ENCODE measurements at regions of chr20 and their contacts with region 1.

Region 1: DNA sequence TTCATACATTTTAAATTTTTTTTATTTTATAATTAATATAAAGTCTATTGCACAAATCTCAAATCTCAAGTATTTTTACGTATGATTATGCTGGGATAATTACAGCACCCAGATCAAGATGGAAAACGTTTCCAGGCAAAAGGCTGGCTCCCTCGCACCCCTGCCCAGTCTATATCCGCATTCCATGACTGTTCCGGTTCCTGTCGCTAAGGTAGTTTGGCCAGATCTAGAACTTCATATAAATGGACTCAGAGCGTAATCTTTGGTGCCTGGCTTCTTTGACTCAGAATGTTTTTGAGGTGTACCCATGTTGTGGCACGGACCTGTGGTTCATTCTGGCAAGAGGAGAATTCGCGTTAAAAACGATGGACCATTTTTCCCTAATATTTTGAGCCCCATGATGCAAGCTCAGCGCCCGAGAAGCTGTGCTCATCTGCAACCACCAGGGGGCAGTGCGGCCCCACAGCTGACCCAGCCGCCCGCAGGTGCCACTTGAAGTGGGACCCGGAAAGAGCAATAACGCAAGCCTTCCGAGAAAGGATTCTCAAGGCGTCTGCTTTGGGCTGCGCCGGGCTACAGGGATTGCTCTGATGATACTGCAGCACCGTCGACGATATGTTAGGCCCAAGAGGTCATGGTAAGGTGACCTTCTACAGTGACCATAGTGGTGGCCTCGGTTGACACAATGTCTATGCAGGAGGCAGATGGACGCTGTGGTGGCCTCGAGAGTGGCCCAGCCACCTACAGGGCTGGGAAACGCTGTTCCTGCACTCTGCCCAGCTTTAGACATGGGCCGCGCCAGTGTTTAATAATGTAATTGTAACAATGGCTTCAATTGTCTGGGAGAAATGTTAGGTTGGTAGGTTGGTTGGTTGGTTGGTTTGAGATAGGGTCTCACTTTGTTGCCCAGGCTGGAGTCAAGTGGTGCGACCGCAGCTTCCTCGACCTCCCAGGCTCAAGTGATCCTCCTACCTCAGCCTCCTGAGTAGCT is 160.1 kb downstream of the ZMYND8 start:
- DNase-seq: peak; percentile 94
- H3K4me3 ChIP-seq: peak overlapping the region in 1 of 8 donors; percentile 21
- H3K27ac ChIP-seq: no peak overlapping the region
- H3K4me1 ChIP-seq: peaks cover 0 to 15% (median 8%) of the 10 kb centered on the region in 6 donors
- H3K27me3 ChIP-seq: no peaks in the 10 kb centered on the region
- CTCF ChIP-seq: peak; percentile 68 to 96 (median 91)
- POLR2A ChIP-seq: no peak

Region 2: GRCh38 chr20:47111576-47111975 is 84.8 kb before region 1 on chr20:
- intact Hi-C with region 1: no loop called
- DNase-seq: no peak
- H3K4me3 ChIP-seq: no peak overlapping the region
- H3K27ac ChIP-seq: no peak overlapping the region
- H3K4me1 ChIP-seq: no peaks in the 10 kb centered on the region
- H3K27me3 ChIP-seq: peaks cover 0 to 23% (median 0%) of the 10 kb centered on the region in 7 donors
- CTCF ChIP-seq: no peak
- POLR2A ChIP-seq: no peak

Region 3: DNA sequence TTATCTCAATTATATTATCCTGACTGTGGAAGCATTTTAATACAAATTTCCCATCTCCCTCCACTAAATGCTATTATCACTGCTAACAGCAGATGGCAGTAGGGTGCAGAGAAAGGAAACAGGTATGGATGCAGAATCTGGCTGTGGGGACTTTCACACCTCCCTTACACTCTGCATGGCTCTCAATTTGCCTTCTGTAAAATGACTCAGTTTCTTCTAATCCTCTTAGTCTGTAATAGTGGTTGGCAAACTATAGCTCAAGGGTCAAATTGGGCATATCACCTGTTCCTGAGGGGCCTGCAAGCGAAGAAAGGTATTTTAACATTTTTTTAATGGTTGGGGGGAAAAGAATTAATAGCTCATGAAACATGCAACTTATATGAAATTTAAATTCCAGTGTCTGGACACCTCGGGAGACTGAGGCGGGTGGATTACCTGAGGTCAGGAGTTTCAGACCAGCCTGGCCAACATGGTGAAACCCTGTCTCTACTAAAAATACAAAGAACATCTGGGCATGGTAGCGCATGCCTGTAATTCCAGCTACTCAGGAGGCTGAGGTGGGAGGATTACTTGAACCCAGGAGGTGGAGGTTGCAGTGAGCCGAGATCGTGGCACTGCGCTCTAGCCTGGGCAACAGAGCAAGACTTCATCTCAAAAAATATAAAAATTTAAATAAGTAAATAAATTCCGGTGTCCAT is 76.7 kb after region 1 on chr20:
- intact Hi-C with region 1: no loop called
- DNase-seq: no peak
- H3K4me3 ChIP-seq: no peak overlapping the region
- H3K27ac ChIP-seq: peak overlapping the region in 7 of 8 donors; percentile 73 to 83 (median 79)
- H3K4me1 ChIP-seq: peaks cover 8 to 58% (median 37%) of the 10 kb centered on the region in 6 donors
- H3K27me3 ChIP-seq: no peaks in the 10 kb centered on the region
- CTCF ChIP-seq: peak; percentile 74 to 97 (median 86)
- POLR2A ChIP-seq: no peak

Region 4: DNA sequence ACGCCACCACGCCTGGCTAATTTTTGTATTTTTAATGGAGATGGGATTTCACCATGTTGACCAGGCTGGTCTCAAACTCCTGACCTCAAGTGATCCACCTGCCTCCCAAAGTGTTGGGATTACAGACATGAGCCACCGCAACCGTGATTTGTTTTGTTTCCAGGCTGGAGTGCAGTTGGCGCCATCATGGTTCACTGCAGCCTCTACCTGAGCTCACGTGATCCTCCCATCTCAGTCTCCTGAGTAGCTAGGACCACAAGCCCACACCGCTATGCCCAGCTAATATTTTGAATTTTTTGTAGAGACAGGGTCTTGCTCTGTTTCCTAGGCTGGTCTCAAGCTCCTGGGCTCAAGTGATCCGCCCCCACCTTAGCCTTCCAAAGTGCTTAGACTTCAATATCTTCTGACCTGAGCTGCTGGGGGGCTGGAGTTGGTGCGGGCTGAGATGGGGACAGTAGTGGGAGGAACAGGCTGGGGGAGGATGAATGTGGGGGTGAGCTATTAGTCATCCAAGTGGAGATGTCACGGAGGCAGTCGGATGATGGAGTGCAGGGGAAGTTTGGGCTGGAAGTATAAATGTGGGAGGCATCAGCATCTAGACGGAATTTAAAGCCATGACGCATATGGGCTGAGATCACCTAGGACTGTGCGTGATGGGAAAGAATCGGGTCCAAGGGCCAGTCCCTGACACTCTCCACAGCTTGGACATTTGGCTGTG is 183.2 kb after region 1 on chr20:
- intact Hi-C with region 1: loop called (anchors 5 kb)
- DNase-seq: no peak
- H3K4me3 ChIP-seq: no peak overlapping the region
- H3K27ac ChIP-seq: peak overlapping the region in 6 of 8 donors; percentile 51 to 81 (median 61)
- H3K4me1 ChIP-seq: peaks cover 11 to 39% (median 21%) of the 10 kb centered on the region in 6 donors
- H3K27me3 ChIP-seq: no peaks in the 10 kb centered on the region
- CTCF ChIP-seq: no peak
- POLR2A ChIP-seq: no peak

Region 5: DNA sequence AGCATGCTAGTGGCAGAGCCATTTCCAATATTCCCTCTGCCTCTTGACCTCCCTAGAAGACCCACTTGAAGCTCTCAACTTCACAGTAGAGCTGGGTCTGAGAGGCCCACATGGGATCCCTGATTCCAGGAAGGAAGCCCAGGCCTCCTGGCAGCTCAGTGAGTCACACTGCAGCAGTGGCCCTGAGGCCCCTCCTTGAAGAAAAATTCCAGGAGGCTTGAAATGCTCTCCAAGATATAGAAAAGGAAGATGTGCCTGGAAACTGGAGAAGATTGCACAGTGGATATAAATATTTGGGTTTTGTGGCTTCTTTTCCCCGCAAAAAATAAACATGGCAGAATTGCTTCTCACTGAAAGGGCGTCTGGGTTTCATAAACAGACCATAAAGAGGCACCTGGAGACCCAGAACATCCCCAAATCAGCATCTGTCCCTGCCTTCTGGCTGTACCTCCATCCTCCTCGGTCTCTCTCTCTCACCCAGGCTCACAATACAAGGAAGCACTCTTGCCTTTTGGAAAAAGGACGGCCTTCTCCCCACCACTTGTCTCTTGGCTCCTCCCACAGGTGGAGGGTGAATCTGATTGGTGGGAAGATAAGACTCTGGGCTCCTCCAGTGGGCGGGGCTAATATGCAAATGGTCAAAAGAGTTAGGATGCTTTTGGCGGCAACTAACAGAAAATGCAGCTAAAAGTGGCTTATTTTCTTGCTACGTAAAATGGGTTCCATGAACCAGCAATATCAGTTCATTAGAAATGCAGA is 788.9 kb after region 1 on chr20:
- intact Hi-C with region 1: no loop called
- DNase-seq: no peak
- H3K4me3 ChIP-seq: no peak overlapping the region
- H3K27ac ChIP-seq: no peak overlapping the region
- H3K4me1 ChIP-seq: peaks cover 0 to 7% (median 4%) of the 10 kb centered on the region in 6 donors
- H3K27me3 ChIP-seq: peaks cover 0 to 12% (median 0%) of the 10 kb centered on the region in 7 donors
- CTCF ChIP-seq: no peak
- POLR2A ChIP-seq: no peak